Naive thymus-derived CD4-positive, alpha-beta T cell (primary cell): ENCODE measurements at regions of chr5 and their contacts with region 1.

Region 1: GRCh38 chr5:173144200-173145176 is at the start of gene BNIP1:
- DNase-seq: peak; percentile 92 to 99 (median 96)
- ATAC-seq: peak; percentile 94
- H3K4me3 ChIP-seq: peak within 1 kb of the TSS; percentile 100
- H3K4me3 Mint-ChIP-seq: peak within 1 kb of the TSS; percentile 93 to 99 (median 97)
- H3K27ac ChIP-seq: peak within 1 kb of the TSS; percentile 98
- H3K27ac Mint-ChIP-seq: peak within 1 kb of the TSS; percentile 96 to 99 (median 98)
- H3K4me1 ChIP-seq: no peaks in the 10 kb centered on the region
- H3K4me1 Mint-ChIP-seq: peaks cover 5 to 21% (median 16%) of the 10 kb centered on the region in 7 donors
- H3K27me3 ChIP-seq: no peaks in the 10 kb centered on the region
- H3K27me3 Mint-ChIP-seq: no peaks in the 10 kb centered on the region
- total RNA-seq, gene BNIP1: 5.5 to 23.2 (median 15.3) TPM

Region 2: GRCh38 chr5:172764849-172765765 is 379.4 kb before region 1 on chr5:
- CTCF ChIA-PET with region 1: no interaction called
- POLR2A ChIA-PET with region 1: no interaction called
- intact Hi-C with region 1: loop called in 1 of 2 experiments (anchors 1 kb)
- DNase-seq: peak; percentile 86 to 100 (median 99)
- ATAC-seq: peak; percentile 73
- H3K4me3 ChIP-seq: peak overlapping the region; percentile 64
- H3K4me3 Mint-ChIP-seq: peak overlapping the region; percentile 80 to 93 (median 84)
- H3K27ac ChIP-seq: peak overlapping the region; percentile 93
- H3K27ac Mint-ChIP-seq: peak overlapping the region; percentile 94 to 100 (median 97)
- H3K4me1 ChIP-seq: peaks cover 25 to 31% of the 10 kb centered on the region in 2 donors
- H3K4me1 Mint-ChIP-seq: peaks cover 8 to 62% (median 52%) of the 10 kb centered on the region in 7 donors
- H3K27me3 ChIP-seq: no peaks in the 10 kb centered on the region
- H3K27me3 Mint-ChIP-seq: peaks cover 0 to 8% (median 0%) of the 10 kb centered on the region in 5 donors

Region 3: GRCh38 chr5:173119719-173120118 is 24.8 kb before region 1 on chr5:
- CTCF ChIA-PET with region 1: interaction called, 5 read pairs
- POLR2A ChIA-PET with region 1: no interaction called
- intact Hi-C with region 1: loop called in 1 of 2 experiments (anchors 2 kb)
- DNase-seq: no peak
- ATAC-seq: no peak
- H3K4me3 ChIP-seq: no peak overlapping the region
- H3K4me3 Mint-ChIP-seq: no peak overlapping the region
- H3K27ac ChIP-seq: no peak overlapping the region
- H3K27ac Mint-ChIP-seq: peak overlapping the region in 1 of 9 donors; percentile 65
- H3K4me1 ChIP-seq: no peaks in the 10 kb centered on the region
- H3K4me1 Mint-ChIP-seq: peaks cover 0 to 3% (median 0%) of the 10 kb centered on the region in 7 donors
- H3K27me3 ChIP-seq: no peaks in the 10 kb centered on the region
- H3K27me3 Mint-ChIP-seq: no peaks in the 10 kb centered on the region

Region 4: GRCh38 chr5:173293817-173294672 is 149.6 kb after region 1 on chr5:
- CTCF ChIA-PET with region 1: no interaction called
- POLR2A ChIA-PET with region 1: no interaction called
- intact Hi-C with region 1: loop called in 1 of 2 experiments (anchors 10 kb)
- DNase-seq: peak; percentile 34 to 75 (median 58)
- ATAC-seq: peak; percentile 78
- H3K4me3 ChIP-seq: peak overlapping the region; percentile 34
- H3K4me3 Mint-ChIP-seq: peak overlapping the region; percentile 24 to 88 (median 75)
- H3K27ac ChIP-seq: no peak overlapping the region
- H3K27ac Mint-ChIP-seq: no peak overlapping the region
- H3K4me1 ChIP-seq: peaks cover 4 to 11% of the 10 kb centered on the region in 2 donors
- H3K4me1 Mint-ChIP-seq: peaks cover 11 to 18% (median 13%) of the 10 kb centered on the region in 7 donors
- H3K27me3 ChIP-seq: no peaks in the 10 kb centered on the region
- H3K27me3 Mint-ChIP-seq: peaks cover 45 to 63% (median 52%) of the 10 kb centered on the region in 5 donors

Region 5: DNA sequence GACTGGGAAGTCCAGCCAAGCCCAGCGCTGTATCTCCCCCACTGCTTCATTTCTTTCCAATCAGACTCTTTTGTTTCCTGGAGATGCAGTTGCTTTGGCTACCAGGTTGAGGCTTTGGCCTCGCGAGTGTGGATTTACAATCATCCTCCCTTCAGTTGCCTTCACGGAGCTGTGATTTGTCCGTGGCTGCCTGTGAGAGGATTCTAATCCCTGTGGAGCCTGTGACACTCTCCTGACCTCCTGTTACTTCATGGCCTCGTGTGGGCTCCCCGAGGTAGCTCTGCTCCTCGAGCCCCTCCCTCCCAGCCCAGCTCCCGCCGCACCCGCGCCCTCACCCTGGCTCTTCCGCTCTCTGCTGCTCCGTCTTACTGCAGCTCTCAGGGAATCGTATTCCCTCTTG is 291.0 kb after region 1 on chr5:
- CTCF ChIA-PET with region 1: no interaction called
- POLR2A ChIA-PET with region 1: no interaction called
- intact Hi-C with region 1: no loop called
- DNase-seq: no peak
- ATAC-seq: no peak
- H3K4me3 ChIP-seq: no peak overlapping the region
- H3K4me3 Mint-ChIP-seq: no peak overlapping the region
- H3K27ac ChIP-seq: no peak overlapping the region
- H3K27ac Mint-ChIP-seq: no peak overlapping the region
- H3K4me1 ChIP-seq: no peaks in the 10 kb centered on the region
- H3K4me1 Mint-ChIP-seq: peaks cover 0 to 2% (median 0%) of the 10 kb centered on the region in 7 donors
- H3K27me3 ChIP-seq: no peaks in the 10 kb centered on the region
- H3K27me3 Mint-ChIP-seq: peaks cover 0 to 25% (median 17%) of the 10 kb centered on the region in 5 donors